ENCODE measurements at regions of chr4 and their contacts with region 1.

Region 1: DNA sequence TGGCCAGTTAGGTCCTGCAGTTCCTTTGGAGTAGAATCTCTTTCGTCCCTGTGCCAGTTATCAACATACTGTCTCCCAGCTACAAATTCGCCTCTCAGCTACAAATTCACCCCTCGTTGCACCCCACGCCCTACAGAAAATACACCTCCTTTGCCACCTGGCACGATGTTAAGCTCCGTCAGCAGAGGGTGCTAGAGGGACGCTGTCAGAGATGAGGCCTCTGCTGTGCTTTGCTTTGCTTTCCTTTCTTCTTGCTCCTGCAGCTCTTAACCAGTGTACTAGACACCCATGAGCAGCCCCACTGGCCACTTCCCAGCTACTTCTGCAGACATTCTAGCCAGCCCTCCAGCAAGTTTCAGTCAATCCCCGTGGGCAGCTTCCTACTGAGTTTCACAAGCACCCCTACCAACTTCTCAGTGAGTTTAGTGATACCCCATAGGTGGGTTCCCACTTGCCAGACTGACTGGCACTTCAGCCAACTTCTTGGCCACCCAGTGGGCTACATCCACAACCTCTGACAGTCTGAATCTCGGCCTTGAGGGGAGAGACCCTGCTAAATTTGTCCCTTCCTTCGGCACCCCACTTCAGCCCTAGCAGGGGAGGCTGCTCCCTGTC is 21.8 kb downstream of the HAUS3 start:
- DNase-seq: peak in 1 of 2 donors; percentile 83
- H3K4me3 ChIP-seq: no peak overlapping the region
- H3K27ac ChIP-seq: no peak overlapping the region
- H3K4me1 ChIP-seq: no peaks in the 10 kb centered on the region
- H3K27me3 ChIP-seq: no peaks in the 10 kb centered on the region
- CTCF ChIP-seq: peak; percentile 64 to 88 (median 64)

Region 2: GRCh38 chr4:2462218-2462991 is 242.3 kb after region 1 on chr4:
- intact Hi-C with region 1: loop called (anchors 2 kb)
- DNase-seq: peak in 1 of 2 donors; percentile 77
- H3K4me3 ChIP-seq: peak overlapping the region; percentile 50 to 74
- H3K27ac ChIP-seq: peak overlapping the region in 1 of 2 donors; percentile 26
- H3K4me1 ChIP-seq: peaks cover 4 to 8% of the 10 kb centered on the region in 2 donors
- H3K27me3 ChIP-seq: no peaks in the 10 kb centered on the region
- CTCF ChIP-seq: peak in 2 of 3 experiments; percentile 32 to 68

Region 3: GRCh38 chr4:2624782-2625530 is 404.8 kb after region 1 on chr4:
- intact Hi-C with region 1: loop called (anchors 10 kb)
- DNase-seq: no peak
- H3K4me3 ChIP-seq: no peak overlapping the region
- H3K27ac ChIP-seq: no peak overlapping the region
- H3K4me1 ChIP-seq: no peaks in the 10 kb centered on the region
- H3K27me3 ChIP-seq: no peaks in the 10 kb centered on the region
- CTCF ChIP-seq: no peak

Measured in ascending aorta (tissue), 2 donors.